BJ (cell line): ENCODE measurements at regions of chr2 and their contacts with region 1.

Region 1: DNA sequence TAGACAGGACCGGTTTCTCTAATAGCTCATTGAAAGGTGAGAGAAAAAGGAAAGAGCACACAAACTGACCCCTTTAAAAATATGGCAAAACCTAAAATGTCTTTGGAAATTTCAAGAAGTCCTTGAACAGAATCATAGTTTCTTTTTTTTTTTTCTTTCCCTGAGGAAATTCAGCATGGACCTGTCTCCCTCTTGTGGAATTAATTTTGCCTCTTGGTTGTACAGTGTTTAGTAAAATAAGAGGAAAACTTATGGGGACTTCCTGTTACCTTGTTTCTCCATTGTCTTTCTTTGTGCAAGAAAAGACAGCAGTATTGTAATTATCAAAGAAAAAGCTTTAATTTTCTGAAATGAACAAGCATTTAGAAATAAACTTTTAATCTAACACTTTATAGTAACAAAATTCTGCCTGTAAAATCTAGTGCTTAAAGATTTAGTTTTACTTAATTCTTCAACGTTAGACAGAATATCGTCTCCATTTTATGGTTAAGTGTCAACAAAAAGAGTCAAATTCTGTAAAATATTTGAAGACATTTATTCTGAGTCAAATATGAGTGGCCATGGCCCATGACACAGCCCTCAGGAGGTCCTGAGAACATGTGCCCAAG is 176.3 kb upstream of the NABP1 start:
- DNase-seq: no peak
- H3K4me3 ChIP-seq: no peak overlapping the region
- H3K27me3 ChIP-seq: no peaks in the 10 kb centered on the region
- CTCF ChIP-seq: peak; percentile 66

Region 2: GRCh38 chr2:191051825-191052778 is 449.6 kb before region 1 on chr2:
- CTCF ChIA-PET with region 1: interaction called, 12 read pairs
- POLR2A ChIA-PET with region 1: no interaction called
- DNase-seq: peak; percentile 26
- H3K4me3 ChIP-seq: no peak overlapping the region
- H3K27me3 ChIP-seq: no peaks in the 10 kb centered on the region
- CTCF ChIP-seq: peak; percentile 55

Region 3: GRCh38 chr2:191218292-191218898 is 283.3 kb before region 1 on chr2:
- CTCF ChIA-PET with region 1: interaction called, 14 read pairs
- POLR2A ChIA-PET with region 1: no interaction called
- DNase-seq: no peak
- H3K4me3 ChIP-seq: no peak overlapping the region
- H3K27me3 ChIP-seq: no peaks in the 10 kb centered on the region
- CTCF ChIP-seq: peak; percentile 50

Region 4: GRCh38 chr2:191245046-191245868 is 256.4 kb before region 1 on chr2 and contains the start of gene MYO1B:
- CTCF ChIA-PET with region 1: interaction called, 23 read pairs
- POLR2A ChIA-PET with region 1: no interaction called
- DNase-seq: no peak
- H3K4me3 ChIP-seq: peak within 1 kb of the TSS; percentile 88
- H3K27me3 ChIP-seq: no peaks in the 10 kb centered on the region
- CTCF ChIP-seq: peak; percentile 47
- polyA plus RNA-seq, gene MYO1B: 87.2 and 122 TPM in 2 replicates

Region 5: GRCh38 chr2:191515551-191515950 is 13.9 kb after region 1 on chr2:
- CTCF ChIA-PET with region 1: interaction called, 10 read pairs
- POLR2A ChIA-PET with region 1: no interaction called
- DNase-seq: no peak
- H3K4me3 ChIP-seq: no peak overlapping the region
- H3K27me3 ChIP-seq: no peaks in the 10 kb centered on the region
- CTCF ChIP-seq: no peak